ENCODE measurements at regions of chr21 and their contacts with region 1.

Region 1: DNA sequence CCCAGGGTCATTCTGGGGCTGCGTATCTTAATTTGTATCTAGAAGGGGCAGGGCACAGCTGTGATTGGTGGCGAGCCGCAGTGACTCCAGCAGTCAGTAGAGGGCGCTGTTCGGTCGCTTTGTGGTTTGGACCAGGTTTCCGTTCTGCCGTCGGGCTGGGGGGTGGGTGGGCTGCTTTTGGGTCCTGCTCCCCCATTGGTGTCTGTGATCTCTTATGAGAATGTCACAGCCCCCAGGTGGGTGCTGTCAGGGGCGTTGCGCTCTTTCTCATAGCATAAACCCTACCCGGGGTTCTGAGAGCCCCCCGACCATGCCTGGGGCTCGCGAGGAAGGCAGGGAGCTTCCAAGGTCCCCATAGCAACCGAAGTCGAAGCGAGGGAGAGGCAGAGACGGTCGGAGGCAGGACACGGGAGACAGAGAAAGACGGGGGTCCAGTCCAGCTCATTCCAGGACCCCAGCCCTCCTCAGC is 5.4 kb downstream of the TFF3 start:
- DNase-seq: peak; percentile 54 to 83 (median 69)
- H3K4me3 ChIP-seq: no peak overlapping the region
- H3K27ac ChIP-seq: no peak overlapping the region
- H3K4me1 ChIP-seq: peaks cover 0 to 4% of the 10 kb centered on the region in 2 donors
- H3K27me3 ChIP-seq: peaks cover 6% of the 10 kb centered on the region
- CTCF ChIP-seq: peak; percentile 55 to 73 (median 64)
- POLR2A ChIP-seq: no peak

Region 2: DNA sequence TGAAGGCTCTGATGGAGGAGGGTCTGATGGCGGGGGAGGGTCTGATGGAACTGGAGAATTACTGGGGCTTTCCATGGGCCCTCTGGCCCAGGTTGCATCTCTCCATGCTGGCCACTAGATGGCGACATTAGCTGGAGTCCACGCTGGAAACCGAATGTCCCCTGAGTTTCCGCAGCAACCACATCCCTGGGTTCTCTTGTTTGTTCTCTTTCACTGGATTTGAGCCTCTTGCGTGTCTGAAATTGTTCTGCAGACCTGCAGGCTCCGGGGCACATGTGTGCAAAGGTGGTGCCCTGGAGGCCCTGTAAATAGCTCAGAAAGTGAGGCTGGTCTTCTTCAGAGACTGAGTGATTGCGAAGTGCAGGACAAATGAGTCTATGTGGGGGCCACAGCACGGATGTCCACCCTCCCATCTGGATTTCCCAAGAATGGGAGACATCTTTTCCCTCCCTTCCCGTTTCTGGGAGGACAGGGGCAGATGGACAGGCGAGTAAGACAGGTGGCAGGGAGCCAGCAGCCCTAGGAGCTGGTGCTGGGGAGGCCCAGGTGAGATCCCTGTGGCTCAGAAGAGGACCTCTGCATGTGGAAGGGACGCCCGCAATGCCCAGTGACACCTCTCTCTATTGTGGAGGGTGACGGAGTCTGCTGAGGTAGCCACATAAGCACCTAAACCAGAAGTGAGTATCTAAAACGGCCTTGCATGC is 164.1 kb before region 1 on chr21:
- intact Hi-C with region 1: loop called in 1 of 2 experiments (anchors 10 kb)
- DNase-seq: peak; percentile 56 to 79 (median 63)
- H3K4me3 ChIP-seq: no peak overlapping the region
- H3K27ac ChIP-seq: no peak overlapping the region
- H3K4me1 ChIP-seq: no peaks in the 10 kb centered on the region
- H3K27me3 ChIP-seq: no peaks in the 10 kb centered on the region
- CTCF ChIP-seq: peak; percentile 88 to 97 (median 92)
- POLR2A ChIP-seq: no peak

Region 3: GRCh38 chr21:42449296-42449927 is 139.6 kb after region 1 on chr21:
- intact Hi-C with region 1: loop called (anchors 5 to 10 kb)
- DNase-seq: no peak
- H3K4me3 ChIP-seq: no peak overlapping the region
- H3K27ac ChIP-seq: peak overlapping the region in 1 of 5 donors; percentile 17
- H3K4me1 ChIP-seq: no peaks in the 10 kb centered on the region
- H3K27me3 ChIP-seq: no peaks in the 10 kb centered on the region
- CTCF ChIP-seq: no peak
- POLR2A ChIP-seq: no peak

Region 4: GRCh38 chr21:42456457-42456856 is 146.7 kb after region 1 on chr21:
- intact Hi-C with region 1: loop called in 1 of 2 experiments (anchors 10 kb)
- DNase-seq: no peak
- H3K4me3 ChIP-seq: no peak overlapping the region
- H3K27ac ChIP-seq: no peak overlapping the region
- H3K4me1 ChIP-seq: no peaks in the 10 kb centered on the region
- H3K27me3 ChIP-seq: no peaks in the 10 kb centered on the region
- CTCF ChIP-seq: no peak
- POLR2A ChIP-seq: no peak